Activated CD8-positive, alpha-beta T cell treated with anti-CD3 and anti-CD28 coated beads for 36 hours (primary cell): ENCODE measurements at regions of chr2 and their contacts with region 1.

Region 1: DNA sequence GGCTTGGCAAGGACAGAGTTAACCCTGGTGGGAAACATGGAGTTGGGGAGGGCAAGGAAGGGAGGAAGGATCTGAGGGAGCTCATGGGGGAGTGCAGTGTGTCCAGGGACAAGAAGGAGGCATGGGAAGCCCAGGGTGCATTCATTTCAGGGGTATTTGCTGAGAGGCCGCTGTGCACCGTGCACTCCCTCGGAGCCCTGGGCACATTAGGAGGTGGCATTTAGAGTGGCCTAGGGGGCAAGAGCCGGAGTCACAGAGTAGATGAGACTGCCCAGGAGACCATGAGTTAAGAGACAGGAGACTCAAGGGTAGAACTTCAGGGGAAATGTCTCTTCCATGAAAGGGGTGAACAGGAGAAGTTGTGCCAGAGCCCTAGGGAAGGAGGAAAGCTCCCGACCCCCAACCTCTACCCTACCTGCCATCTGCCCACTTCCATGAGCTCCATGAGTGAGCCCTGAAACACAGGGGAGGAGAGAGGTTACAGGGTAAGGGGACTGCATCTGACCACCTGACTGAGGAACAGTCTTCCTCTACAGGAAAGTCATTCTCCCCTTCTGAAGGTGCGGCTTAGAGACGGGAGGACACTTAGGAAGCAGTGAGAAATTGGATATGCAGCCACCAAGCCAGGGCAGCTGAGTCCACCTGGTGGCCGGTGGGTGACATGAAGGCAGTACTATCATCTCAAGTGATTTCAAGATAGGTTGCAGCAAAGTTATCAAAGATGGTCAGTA is 58.5 kb upstream of the COPS8 start:
- DNase-seq: peak; percentile 60
- ATAC-seq: peak; percentile 61
- H3K4me3 Mint-ChIP-seq: no peak overlapping the region
- H3K27ac Mint-ChIP-seq: no peak overlapping the region
- H3K4me1 Mint-ChIP-seq: no peaks in the 10 kb centered on the region
- H3K27me3 Mint-ChIP-seq: peaks cover 3% of the 10 kb centered on the region
- CTCF ChIP-seq: no peak

Region 2: DNA sequence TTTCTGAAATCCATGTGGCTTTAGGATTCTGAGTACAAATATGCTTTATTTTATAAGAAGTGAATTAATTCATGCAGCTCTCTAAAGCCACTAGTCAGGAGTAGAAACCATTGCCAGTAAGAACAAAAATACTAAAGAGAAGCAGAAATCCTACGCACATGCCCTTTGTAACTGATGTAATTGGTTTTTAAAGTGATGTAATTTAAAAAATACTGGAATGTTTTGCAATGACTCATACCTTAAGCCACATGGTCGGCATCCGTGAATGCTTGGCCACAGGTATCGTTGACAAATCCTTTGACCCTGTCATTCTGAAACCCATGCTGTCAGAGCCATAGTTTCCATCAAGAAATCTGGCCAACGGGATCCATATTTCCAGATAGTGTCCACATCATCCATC is 244.2 kb before region 1 on chr2:
- CTCF ChIA-PET with region 1: no interaction called
- POLR2A ChIA-PET with region 1: no interaction called
- intact Hi-C with region 1: no loop called
- DNase-seq: no peak
- ATAC-seq: no peak
- H3K4me3 Mint-ChIP-seq: no peak overlapping the region
- H3K27ac Mint-ChIP-seq: no peak overlapping the region
- H3K4me1 Mint-ChIP-seq: no peaks in the 10 kb centered on the region
- H3K27me3 Mint-ChIP-seq: peaks cover 21% of the 10 kb centered on the region
- CTCF ChIP-seq: no peak

Region 3: GRCh38 chr2:237012577-237013267 is 14.4 kb before region 1 on chr2:
- CTCF ChIA-PET with region 1: interaction called, 12 read pairs
- POLR2A ChIA-PET with region 1: no interaction called
- intact Hi-C with region 1: no loop called
- DNase-seq: no peak
- ATAC-seq: no peak
- H3K4me3 Mint-ChIP-seq: no peak overlapping the region
- H3K27ac Mint-ChIP-seq: no peak overlapping the region
- H3K4me1 Mint-ChIP-seq: no peaks in the 10 kb centered on the region
- H3K27me3 Mint-ChIP-seq: no peaks in the 10 kb centered on the region
- CTCF ChIP-seq: no peak